AG04450 (cell line): ENCODE measurements at regions of chr18 and their contacts with region 1.

Region 1: DNA sequence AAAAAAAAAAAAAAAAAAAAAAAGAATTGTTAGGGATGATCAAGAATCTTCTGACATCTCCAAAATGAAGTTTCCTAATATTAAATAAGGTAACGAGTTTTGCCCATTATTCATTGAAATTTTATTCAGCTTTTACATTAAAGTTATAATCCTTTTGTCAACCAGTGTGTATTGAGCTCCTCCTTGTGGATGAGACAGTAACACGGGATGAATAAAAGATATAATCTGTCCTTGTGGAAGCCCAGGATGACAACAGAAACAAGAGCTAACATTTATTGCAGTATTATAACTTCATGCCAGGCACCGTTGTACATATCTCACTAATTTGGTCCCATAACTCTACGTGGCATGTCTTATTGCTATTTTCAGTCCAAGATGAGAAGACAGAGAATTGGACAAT is 33.4 kb upstream of the SERPINB7 start:
- DNase-seq: no peak
- H3K4me3 ChIP-seq: no peak overlapping the region
- H3K27ac ChIP-seq: no peak overlapping the region
- H3K27me3 ChIP-seq: no peaks in the 10 kb centered on the region
- CTCF ChIP-seq: peak; percentile 69

Region 2: GRCh38 chr18:63528863-63529492 is 212.8 kb before region 1 on chr18:
- CTCF ChIA-PET with region 1: interaction called, 16 read pairs
- POLR2A ChIA-PET with region 1: no interaction called
- DNase-seq: no peak
- H3K4me3 ChIP-seq: no peak overlapping the region
- H3K27ac ChIP-seq: no peak overlapping the region
- H3K27me3 ChIP-seq: no peaks in the 10 kb centered on the region
- CTCF ChIP-seq: no peak

Region 3: GRCh38 chr18:63603772-63604171 is 138.0 kb before region 1 on chr18:
- CTCF ChIA-PET with region 1: no interaction called
- POLR2A ChIA-PET with region 1: no interaction called
- DNase-seq: no peak
- H3K4me3 ChIP-seq: no peak overlapping the region
- H3K27ac ChIP-seq: no peak overlapping the region
- H3K27me3 ChIP-seq: no peaks in the 10 kb centered on the region
- CTCF ChIP-seq: no peak

Region 4: GRCh38 chr18:63725682-63726480 is 15.9 kb before region 1 on chr18:
- CTCF ChIA-PET with region 1: interaction called, 13 read pairs
- POLR2A ChIA-PET with region 1: no interaction called
- DNase-seq: no peak
- H3K4me3 ChIP-seq: no peak overlapping the region
- H3K27ac ChIP-seq: no peak overlapping the region
- H3K27me3 ChIP-seq: no peaks in the 10 kb centered on the region
- CTCF ChIP-seq: no peak

Region 5: DNA sequence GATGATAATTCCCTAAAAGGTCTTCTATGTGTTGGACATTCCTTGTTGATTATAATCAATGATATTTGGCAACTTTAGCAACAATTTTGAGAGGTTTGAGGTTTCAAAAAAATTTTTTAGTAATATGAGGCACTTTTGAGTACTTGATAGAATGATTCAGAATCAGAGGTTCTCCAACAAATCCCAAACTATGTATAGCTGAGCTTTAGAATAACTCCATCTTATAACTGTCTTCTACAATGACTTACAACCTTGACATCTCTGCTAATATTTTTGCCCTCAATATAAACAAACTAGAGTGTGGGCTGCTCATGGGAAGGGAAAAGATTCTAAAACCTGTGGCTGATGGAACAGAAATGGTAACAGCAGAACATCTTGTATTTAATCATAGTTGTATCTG is 11.9 kb after region 1 on chr18:
- CTCF ChIA-PET with region 1: interaction called, 11 read pairs
- POLR2A ChIA-PET with region 1: no interaction called
- DNase-seq: no peak
- H3K4me3 ChIP-seq: no peak overlapping the region
- H3K27ac ChIP-seq: no peak overlapping the region
- H3K27me3 ChIP-seq: no peaks in the 10 kb centered on the region
- CTCF ChIP-seq: no peak

Region 6: GRCh38 chr18:63817441-63818051 is 75.8 kb after region 1 on chr18:
- CTCF ChIA-PET with region 1: no interaction called
- POLR2A ChIA-PET with region 1: no interaction called
- DNase-seq: no peak
- H3K4me3 ChIP-seq: no peak overlapping the region
- H3K27ac ChIP-seq: no peak overlapping the region
- H3K27me3 ChIP-seq: no peaks in the 10 kb centered on the region
- CTCF ChIP-seq: no peak

Region 7: GRCh38 chr18:63848159-63848558 is 106.4 kb after region 1 on chr18:
- CTCF ChIA-PET with region 1: interaction called, 68 read pairs
- POLR2A ChIA-PET with region 1: no interaction called
- DNase-seq: peak; percentile 37
- H3K4me3 ChIP-seq: no peak overlapping the region
- H3K27ac ChIP-seq: no peak overlapping the region
- H3K27me3 ChIP-seq: no peaks in the 10 kb centered on the region
- CTCF ChIP-seq: peak; percentile 74

Region 8: DNA sequence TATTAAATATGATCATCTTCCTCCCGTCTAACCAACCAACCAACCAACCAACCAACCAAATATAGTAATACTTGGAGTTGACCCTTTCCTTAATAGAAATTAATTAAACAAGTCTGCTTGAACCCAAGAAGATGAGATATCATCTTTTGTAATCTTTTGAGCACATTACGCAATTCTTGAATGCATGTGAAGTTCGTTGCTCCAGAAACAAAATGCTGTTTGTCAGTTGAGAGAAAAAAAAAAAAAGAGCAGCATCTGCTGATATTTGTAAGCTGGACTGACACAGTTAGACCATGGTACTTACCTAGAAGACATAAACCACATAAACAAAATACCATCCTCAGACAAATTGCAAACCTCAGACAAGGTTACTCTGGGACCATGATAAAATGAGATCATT is 136.6 kb after region 1 on chr18:
- CTCF ChIA-PET with region 1: no interaction called
- POLR2A ChIA-PET with region 1: no interaction called
- DNase-seq: no peak
- H3K4me3 ChIP-seq: no peak overlapping the region
- H3K27ac ChIP-seq: no peak overlapping the region
- H3K27me3 ChIP-seq: no peaks in the 10 kb centered on the region
- CTCF ChIP-seq: no peak